ENCODE measurements at regions of chr15 and their contacts with region 1.

Region 1: DNA sequence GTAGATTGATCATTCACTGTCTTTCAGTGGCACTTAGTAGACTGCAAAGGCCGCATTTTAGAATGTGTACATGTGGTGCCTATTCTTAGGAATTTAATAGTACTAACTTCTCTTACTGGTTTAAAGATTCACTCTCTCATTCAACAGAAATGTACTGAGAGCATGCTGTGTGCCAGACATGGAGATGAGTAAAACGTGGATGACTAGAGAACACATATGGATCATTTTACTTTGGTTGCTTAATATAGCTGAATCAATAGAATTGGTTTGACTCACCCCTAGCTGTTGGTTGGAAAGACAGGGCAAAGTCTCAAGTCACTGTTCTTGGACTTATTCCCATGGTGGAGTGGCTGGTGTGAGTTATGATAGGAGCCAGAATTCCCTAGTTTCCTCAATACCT is 109.1 kb upstream of the TNFAIP8L3 start:
- DNase-seq: no peak
- H3K4me3 ChIP-seq: no peak overlapping the region
- H3K27ac ChIP-seq: no peak overlapping the region
- H3K4me1 ChIP-seq: no peaks in the 10 kb centered on the region
- H3K27me3 ChIP-seq: peaks cover 56 to 72% of the 10 kb centered on the region in 2 experiments
- CTCF ChIP-seq: no peak
- POLR2A ChIP-seq: no peak

Region 2: GRCh38 chr15:49387471-49387870 is 1816.3 kb before region 1 on chr15:
- CTCF ChIA-PET with region 1: no interaction called
- POLR2A ChIA-PET with region 1: no interaction called
- dilution Hi-C with region 1: no loop called
- intact Hi-C with region 1: loop called (anchors 10 kb)
- DNase-seq: no peak
- H3K4me3 ChIP-seq: no peak overlapping the region
- H3K27ac ChIP-seq: no peak overlapping the region
- H3K4me1 ChIP-seq: no peaks in the 10 kb centered on the region
- H3K27me3 ChIP-seq: peaks cover 1 to 6% of the 10 kb centered on the region in 2 experiments
- CTCF ChIP-seq: no peak
- POLR2A ChIP-seq: no peak

Region 3: GRCh38 chr15:50675536-50676144 is 528.2 kb before region 1 on chr15:
- CTCF ChIA-PET with region 1: no interaction called
- POLR2A ChIA-PET with region 1: no interaction called
- dilution Hi-C with region 1: no loop called
- intact Hi-C with region 1: no loop called
- DNase-seq: peak; percentile 69
- H3K4me3 ChIP-seq: no peak overlapping the region
- H3K27ac ChIP-seq: no peak overlapping the region
- H3K4me1 ChIP-seq: no peaks in the 10 kb centered on the region
- H3K27me3 ChIP-seq: no peaks in the 10 kb centered on the region
- CTCF ChIP-seq: peak; percentile 36 to 41
- POLR2A ChIP-seq: no peak

Region 4: GRCh38 chr15:51322621-51323296 is 119.0 kb after region 1 on chr15:
- CTCF ChIA-PET with region 1: no interaction called
- POLR2A ChIA-PET with region 1: no interaction called
- dilution Hi-C with region 1: no loop called
- intact Hi-C with region 1: no loop called
- DNase-seq: no peak
- H3K4me3 ChIP-seq: no peak overlapping the region
- H3K27ac ChIP-seq: no peak overlapping the region
- H3K4me1 ChIP-seq: no peaks in the 10 kb centered on the region
- H3K27me3 ChIP-seq: peaks cover 77 to 87% of the 10 kb centered on the region in 2 experiments
- CTCF ChIP-seq: no peak
- POLR2A ChIP-seq: no peak

Region 5: GRCh38 chr15:51647128-51647562 is 443.3 kb after region 1 on chr15:
- CTCF ChIA-PET with region 1: no interaction called
- POLR2A ChIA-PET with region 1: no interaction called
- dilution Hi-C with region 1: no loop called
- intact Hi-C with region 1: no loop called
- DNase-seq: peak; percentile 42
- H3K4me3 ChIP-seq: no peak overlapping the region
- H3K27ac ChIP-seq: no peak overlapping the region
- H3K4me1 ChIP-seq: peaks cover 2% of the 10 kb centered on the region
- H3K27me3 ChIP-seq: peaks cover 6 to 7% of the 10 kb centered on the region in 2 experiments
- CTCF ChIP-seq: no peak
- POLR2A ChIP-seq: no peak

Measured in endothelial cell of umbilical vein (primary cell).